Caco-2 (cell line): ENCODE measurements at regions of chr15 and their contacts with region 1.

Region 1: DNA sequence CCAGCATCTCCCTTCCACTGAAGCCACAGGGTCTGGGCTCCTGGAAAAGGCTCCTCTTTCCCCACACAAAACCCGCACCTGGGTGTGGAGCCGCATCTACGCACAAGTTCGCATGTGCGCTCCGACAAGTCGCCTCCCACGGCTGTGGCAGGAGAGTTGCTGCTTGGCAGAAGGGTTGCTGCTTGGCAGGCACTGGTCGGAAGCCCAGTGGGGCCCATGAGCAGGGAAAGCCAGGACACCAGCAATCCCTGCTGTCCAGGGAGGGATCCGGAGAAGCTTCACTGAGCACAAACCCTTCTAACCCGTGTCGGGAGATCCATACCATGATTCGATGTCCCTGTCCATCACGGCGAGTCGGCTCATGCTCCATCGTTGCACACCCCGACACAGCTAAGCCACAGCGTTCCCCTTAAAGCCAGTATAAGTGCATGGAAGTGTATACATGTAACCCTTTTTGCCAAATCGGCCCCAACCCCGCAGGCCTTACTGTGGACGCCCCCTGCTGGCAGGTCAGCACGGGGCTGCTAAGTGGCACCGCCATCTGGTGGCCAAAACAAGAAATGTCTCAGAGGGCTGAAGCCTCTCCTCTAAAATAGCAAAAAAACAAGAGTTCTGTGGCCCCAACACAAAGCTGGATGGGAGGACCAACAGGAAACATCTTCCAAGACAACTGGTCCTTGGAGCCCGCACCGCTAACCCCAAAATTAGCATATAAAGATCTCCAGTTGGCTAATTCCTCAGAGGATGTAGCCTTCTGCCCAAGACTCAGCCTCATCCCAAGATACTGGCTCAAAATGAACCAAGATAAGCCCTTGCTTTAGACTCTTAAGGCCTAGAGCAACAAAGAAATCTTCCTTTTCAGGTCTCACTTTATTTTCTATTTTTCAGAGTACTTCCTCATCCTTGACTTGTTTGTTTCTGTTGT is 8.3 kb downstream of the ANKRD63 start:
- DNase-seq: peak; percentile 74 to 89
- H3K4me3 ChIP-seq: no peak overlapping the region
- H3K4me3 Mint-ChIP-seq: no peak overlapping the region
- H3K27ac Mint-ChIP-seq: no peak overlapping the region
- H3K4me1 ChIP-seq: no peaks in the 10 kb centered on the region; the same call in 1 of the 2 replicates
- H3K4me1 Mint-ChIP-seq: no peaks in the 10 kb centered on the region
- H3K27me3 ChIP-seq: no peaks in the 10 kb centered on the region
- H3K27me3 Mint-ChIP-seq: no peaks in the 10 kb centered on the region
- CTCF ChIP-seq: peak; percentile 100

Region 2: GRCh38 chr15:40217159-40217824 is 57.3 kb before region 1 on chr15:
- CTCF ChIA-PET with region 1: interaction called, 67 read pairs
- POLR2A ChIA-PET with region 1: interaction called, 3 read pairs
- intact Hi-C with region 1: loop called (anchors 1 kb)
- DNase-seq: peak; percentile 60 to 85
- H3K4me3 ChIP-seq: no peak overlapping the region
- H3K4me3 Mint-ChIP-seq: no peak overlapping the region
- H3K27ac Mint-ChIP-seq: no peak overlapping the region
- H3K4me1 ChIP-seq: no peaks in the 10 kb centered on the region
- H3K4me1 Mint-ChIP-seq: no peaks in the 10 kb centered on the region
- H3K27me3 ChIP-seq: no peaks in the 10 kb centered on the region
- H3K27me3 Mint-ChIP-seq: no peaks in the 10 kb centered on the region
- CTCF ChIP-seq: peak; percentile 67 to 77

Region 3: DNA sequence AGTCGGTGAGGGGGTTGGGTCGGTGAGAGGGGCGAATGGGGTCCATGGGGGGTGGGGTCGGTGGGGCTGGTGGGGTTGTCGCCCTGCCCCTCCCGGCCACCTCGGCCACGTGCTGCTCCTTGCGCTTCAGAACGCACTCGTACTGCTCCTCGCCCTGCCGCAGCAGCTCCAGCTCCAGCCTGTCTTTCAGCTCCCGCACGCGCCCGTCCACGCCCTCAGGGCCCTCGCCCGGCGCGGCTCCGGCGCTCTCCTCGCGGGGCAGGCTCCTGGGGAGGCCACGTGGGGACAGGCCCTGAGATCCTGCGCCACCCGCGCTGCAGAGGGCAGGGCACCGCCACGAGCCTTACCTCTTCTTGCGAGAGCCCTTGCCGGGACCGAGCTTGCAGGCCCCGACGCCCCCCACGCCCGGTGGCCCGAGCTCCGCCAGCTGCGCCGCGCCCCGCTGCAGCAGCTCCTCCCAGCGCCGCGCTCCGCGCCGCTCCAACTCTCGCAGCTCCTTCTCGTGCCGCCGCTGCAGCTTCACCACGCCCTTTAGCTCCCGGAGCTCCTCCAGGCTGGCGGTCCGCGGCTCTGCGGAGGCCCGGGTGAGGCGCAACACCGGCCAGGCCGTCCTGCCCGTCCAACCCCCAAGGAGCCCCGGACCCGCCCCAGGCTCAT is 16.4 kb after region 1 on chr15:
- CTCF ChIA-PET with region 1: interaction called, 17 read pairs
- POLR2A ChIA-PET with region 1: interaction called, 4 read pairs
- intact Hi-C with region 1: no loop called
- DNase-seq: peak; percentile 74
- H3K4me3 ChIP-seq: peak overlapping the region; percentile 54
- H3K4me3 Mint-ChIP-seq: peak overlapping the region; percentile 76
- H3K27ac Mint-ChIP-seq: no peak overlapping the region
- H3K4me1 ChIP-seq: no peaks in the 10 kb centered on the region
- H3K4me1 Mint-ChIP-seq: no peaks in the 10 kb centered on the region
- H3K27me3 ChIP-seq: no peaks in the 10 kb centered on the region
- H3K27me3 Mint-ChIP-seq: no peaks in the 10 kb centered on the region
- CTCF ChIP-seq: no peak

Region 4: GRCh38 chr15:40338041-40338657 is 63.5 kb after region 1 on chr15:
- CTCF ChIA-PET with region 1: interaction called, 60 read pairs
- POLR2A ChIA-PET with region 1: no interaction called
- intact Hi-C with region 1: loop called (anchors 1 kb)
- DNase-seq: peak; percentile 84 to 87
- H3K4me3 ChIP-seq: no peak overlapping the region
- H3K4me3 Mint-ChIP-seq: no peak overlapping the region
- H3K27ac Mint-ChIP-seq: no peak overlapping the region
- H3K4me1 ChIP-seq: peaks cover 22% of the 10 kb centered on the region
- H3K4me1 Mint-ChIP-seq: peaks cover 26% of the 10 kb centered on the region
- H3K27me3 ChIP-seq: no peaks in the 10 kb centered on the region
- H3K27me3 Mint-ChIP-seq: no peaks in the 10 kb centered on the region
- CTCF ChIP-seq: peak; percentile 91 to 95